ENCODE measurements at regions of chr1 and their contacts with region 1.

Region 1: DNA sequence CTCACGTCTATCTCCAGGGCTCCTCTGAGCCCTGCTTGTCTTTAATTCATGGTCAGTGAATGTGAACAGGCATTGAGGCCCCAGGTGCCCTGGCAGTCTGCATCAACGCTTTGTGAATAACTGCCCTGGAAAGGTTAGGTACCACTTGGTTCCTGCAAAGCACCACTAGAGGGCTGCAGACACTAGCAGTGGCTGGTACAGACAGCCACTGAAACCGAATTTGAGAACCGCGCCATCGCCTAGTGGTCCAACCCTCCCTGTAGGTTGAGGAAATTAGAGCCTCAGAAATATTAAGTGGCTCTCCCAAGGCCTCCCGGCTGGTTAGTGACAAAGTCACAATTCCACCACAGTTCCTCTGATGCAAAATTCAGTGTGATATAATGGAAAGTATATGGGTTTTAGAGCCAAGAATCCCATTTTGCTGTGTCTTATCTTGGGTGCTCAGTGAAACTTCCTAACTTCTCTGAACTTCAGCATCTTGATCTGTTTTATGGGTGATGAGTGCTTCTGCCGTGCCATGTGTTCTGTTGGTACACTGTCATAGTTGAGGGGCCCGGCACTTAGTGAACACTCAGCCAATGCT is 46.2 kb upstream of the BCL9 start:
- DNase-seq: peak in 2 of 3 donors; percentile 54 to 80
- ATAC-seq: peak; percentile 90
- H3K4me3 ChIP-seq: no peak overlapping the region
- H3K4me1 ChIP-seq: no peaks in the 10 kb centered on the region
- CTCF ChIP-seq: peak; percentile 69

Region 2: DNA sequence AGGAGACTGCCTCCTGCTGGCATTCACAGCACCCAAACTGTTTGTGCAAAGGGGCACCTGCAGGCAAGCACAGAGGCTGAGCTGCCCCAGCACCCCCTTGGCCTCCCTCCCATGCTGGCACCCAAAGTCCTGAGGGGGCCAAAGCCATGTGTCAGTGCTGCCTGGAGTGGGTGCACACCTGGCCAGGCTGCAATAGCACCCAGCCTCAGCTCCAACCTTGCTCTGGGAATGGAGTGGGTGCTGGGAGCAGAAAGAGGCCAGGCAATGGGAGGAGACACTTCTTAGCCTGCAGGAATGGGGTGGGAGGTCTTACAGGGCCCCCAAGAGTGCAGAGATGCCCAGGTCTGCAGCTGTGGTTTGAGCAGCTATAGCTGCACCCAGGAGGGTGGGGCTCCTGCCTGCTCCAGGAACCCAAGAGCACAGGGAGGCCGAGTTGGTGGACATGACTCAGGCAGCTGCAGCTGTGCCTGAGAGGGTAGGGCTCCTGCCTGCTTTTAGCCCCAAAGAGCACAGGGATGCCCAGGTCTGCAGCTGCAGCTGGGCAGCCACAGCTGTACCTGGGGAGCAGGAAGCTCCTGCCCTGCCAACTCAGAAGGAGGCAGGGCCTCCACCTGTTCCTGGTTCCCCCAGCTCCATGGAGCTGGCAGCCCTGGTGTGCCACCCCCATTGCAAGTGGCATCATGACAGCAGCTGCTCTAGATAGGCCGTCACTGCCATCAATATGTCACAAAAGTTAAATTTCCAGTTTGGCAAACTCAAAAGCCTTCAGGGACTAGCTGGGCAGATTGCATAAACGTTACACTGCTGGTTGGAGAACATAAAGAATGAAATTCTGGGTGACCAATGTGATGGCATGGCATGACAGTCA is 257.9 kb before region 1 on chr1:
- intact Hi-C with region 1: no loop called
- DNase-seq: peak; percentile 61 to 76 (median 67)
- ATAC-seq: peak; percentile 87
- H3K4me3 ChIP-seq: no peak overlapping the region
- H3K4me1 ChIP-seq: peaks cover 34% of the 10 kb centered on the region
- CTCF ChIP-seq: no peak

Region 3: GRCh38 chr1:147627435-147628110 is 132.5 kb after region 1 on chr1:
- intact Hi-C with region 1: loop called in 1 of 2 experiments (anchors 10 kb)
- DNase-seq: peak in 2 of 3 donors; percentile 51 to 58
- ATAC-seq: peak; percentile 86
- H3K4me3 ChIP-seq: no peak overlapping the region
- H3K4me1 ChIP-seq: no peaks in the 10 kb centered on the region
- CTCF ChIP-seq: peak; percentile 85

Region 4: GRCh38 chr1:147635342-147635741 is 140.3 kb after region 1 on chr1:
- intact Hi-C with region 1: loop called in 1 of 2 experiments (anchors 5 kb)
- DNase-seq: no peak
- ATAC-seq: no peak
- H3K4me3 ChIP-seq: no peak overlapping the region
- H3K4me1 ChIP-seq: no peaks in the 10 kb centered on the region
- CTCF ChIP-seq: no peak

Region 5: DNA sequence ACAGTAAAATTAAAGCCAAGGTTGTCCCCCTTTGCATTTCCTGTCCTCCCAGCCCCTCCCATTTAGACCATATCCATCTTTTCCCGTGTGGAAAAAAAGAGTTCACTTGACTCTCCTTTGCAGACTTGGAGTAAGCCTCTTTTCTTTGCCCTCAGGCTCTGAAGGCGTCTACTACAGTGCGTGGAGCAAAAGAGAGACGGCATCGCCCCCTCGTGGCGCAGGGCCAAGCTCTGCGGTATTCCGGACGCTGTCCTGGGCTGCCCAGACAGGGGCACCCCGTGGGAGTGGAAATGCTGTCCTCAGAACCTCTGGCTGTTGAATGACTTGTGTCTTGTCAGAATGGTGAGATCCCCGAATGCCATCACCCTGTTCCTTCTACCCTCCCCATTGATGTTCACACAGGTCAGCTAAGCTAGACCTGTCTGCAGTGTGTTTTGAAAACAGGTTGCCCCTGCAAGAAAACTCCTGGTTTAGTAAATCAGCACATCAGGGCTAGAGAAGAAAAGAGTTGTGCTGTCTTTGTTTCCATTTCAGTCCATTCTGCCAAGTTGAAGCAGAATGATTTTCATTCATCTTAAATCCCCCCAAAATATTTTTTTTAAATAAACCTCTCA is 395.2 kb after region 1 on chr1:
- intact Hi-C with region 1: loop called in 1 of 2 experiments (anchors 10 kb)
- DNase-seq: peak; percentile 57 to 75 (median 70)
- ATAC-seq: peak; percentile 87
- H3K4me3 ChIP-seq: no peak overlapping the region
- H3K4me1 ChIP-seq: peaks cover 3% of the 10 kb centered on the region
- CTCF ChIP-seq: no peak